ENCODE measurements at regions of chr9 and their contacts with region 1.

Region 1: GRCh38 chr9:27414220-27414761 is 109.8 kb upstream of the IFNK start:
- DNase-seq: no peak

Region 2: DNA sequence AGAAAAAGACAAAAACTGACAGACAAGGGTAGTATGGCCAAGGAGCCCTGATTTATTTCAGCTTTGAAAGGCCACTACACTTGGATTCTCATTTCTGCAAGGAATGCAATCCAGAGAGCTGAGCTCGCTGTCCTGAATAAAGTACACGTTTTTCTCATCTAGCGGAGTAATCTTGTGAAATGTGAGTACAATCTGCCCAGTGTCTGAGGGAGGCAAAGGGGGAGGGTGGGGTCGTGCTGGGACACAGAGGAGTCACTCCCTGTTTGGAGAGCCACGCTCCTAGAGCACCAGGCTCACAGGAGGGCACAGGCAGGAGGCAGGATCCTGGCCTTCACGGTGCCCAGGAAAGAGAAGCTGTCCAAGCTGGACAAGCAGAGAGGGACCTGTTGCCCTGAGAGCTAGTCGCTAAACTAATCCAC is 58.8 kb after region 1 on chr9:
- intact Hi-C with region 1: loop called in 1 of 2 experiments (anchors 10 kb)
- DNase-seq: peak; percentile 87